Colonic mucosa (tissue), 4 donors: ENCODE measurements at regions of chr5 and their contacts with region 1.

Region 1: GRCh38 chr5:76341651-76342334 is 61.3 kb upstream of the IQGAP2 start:
- DNase-seq: no peak
- H3K4me3 ChIP-seq: no peak overlapping the region
- H3K27ac ChIP-seq: no peak overlapping the region
- H3K4me1 ChIP-seq: no peaks in the 10 kb centered on the region
- H3K27me3 ChIP-seq: no peaks in the 10 kb centered on the region
- CTCF ChIP-seq: no peak

Region 2: DNA sequence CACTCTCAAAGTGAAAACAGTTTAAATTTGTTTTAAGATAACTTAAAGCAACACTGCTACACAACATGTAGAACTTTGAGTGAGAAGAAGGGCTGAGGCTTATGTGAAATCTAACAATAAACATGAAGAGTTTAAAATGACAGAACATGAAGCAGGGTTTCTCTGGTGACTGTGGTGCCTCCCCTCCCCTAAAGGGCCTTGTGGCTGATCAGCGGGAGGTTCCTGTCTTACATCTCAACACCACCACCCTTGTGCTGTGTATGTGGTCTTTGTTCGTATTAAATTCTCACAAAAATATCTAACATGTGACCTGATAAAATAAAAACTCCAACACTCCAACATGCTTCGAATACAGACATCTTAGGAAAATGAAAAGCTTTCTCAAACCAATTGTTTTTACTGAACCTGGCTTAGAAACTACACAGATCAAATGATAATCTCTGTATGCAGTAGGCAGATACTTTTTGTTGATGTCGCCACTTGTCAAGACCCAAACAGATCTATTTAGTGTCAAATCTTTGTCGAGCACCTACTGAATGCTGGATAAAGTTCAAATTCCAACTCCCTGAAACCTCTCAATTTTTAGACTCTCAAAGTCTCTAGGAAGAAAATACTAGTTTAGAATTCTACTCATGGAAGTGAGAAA is 51.4 kb after region 1 on chr5:
- intact Hi-C with region 1: loop called (anchors 10 kb)
- DNase-seq: no peak
- H3K4me3 ChIP-seq: no peak overlapping the region
- H3K27ac ChIP-seq: no peak overlapping the region
- H3K4me1 ChIP-seq: peaks cover 7% of the 10 kb centered on the region
- H3K27me3 ChIP-seq: no peaks in the 10 kb centered on the region
- CTCF ChIP-seq: no peak